Activated naive CD4-positive, alpha-beta T cell treated with anti-CD3 and anti-CD28 coated beads, Interleukin-2, amount 10 ng/mL, durations not matched to agents 7 days and 5 days (primary cell): ENCODE measurements at regions of chr2 and their contacts with region 1.

Region 1: GRCh38 chr2:175251425-175252041 is 70.0 kb upstream of the ATP5MC3 start:
- DNase-seq: peak; percentile 22
- H3K4me3 Mint-ChIP-seq: no peak overlapping the region
- H3K27ac Mint-ChIP-seq: no peak overlapping the region
- H3K4me1 Mint-ChIP-seq: peaks cover 2% of the 10 kb centered on the region
- H3K27me3 Mint-ChIP-seq: peaks cover 15% of the 10 kb centered on the region

Region 2: DNA sequence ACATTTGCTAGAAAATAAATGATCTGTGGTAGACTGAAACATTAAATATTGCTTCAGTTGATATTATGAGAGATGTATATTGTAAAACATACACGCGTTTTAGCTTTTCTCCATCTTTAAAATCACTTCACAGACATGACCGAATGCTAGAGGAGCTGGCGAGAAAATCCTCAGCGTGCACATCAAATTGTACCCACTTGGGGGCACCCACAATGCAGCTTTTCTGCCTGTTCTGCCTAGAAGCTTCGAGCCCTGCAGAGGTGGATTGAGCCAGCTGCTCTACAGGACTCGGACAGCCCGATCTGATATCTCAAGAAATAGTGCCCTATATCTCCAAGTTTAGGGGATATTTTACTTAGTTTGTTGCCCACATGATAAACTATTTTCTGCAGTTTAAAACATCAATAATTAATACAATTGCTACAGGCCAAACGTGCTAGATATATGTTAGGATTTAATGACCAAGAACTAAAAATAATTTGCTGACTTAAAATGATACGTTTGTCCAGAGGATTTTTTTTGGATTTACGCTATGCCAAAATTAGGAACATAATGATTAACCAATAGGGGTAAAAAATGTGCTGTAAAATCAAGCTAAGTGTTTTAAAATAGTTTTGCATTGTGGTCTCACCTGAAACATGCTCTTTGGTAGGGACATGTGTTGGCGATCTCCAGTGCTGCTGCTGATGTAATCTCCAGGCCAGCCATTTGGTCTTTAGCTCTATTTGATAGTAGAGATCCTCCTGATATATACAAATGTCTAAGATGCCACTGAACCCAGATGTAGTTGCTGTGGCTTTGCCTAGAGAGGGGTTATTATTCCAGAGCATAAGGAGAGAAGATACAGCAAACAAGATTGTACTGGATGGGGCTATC is 47.7 kb before region 1 on chr2:
- CTCF ChIA-PET with region 1: interaction called, 14 read pairs
- DNase-seq: peak; percentile 57
- H3K4me3 Mint-ChIP-seq: no peak overlapping the region
- H3K27ac Mint-ChIP-seq: no peak overlapping the region
- H3K4me1 Mint-ChIP-seq: peaks cover 4% of the 10 kb centered on the region
- H3K27me3 Mint-ChIP-seq: peaks cover 8% of the 10 kb centered on the region

Region 3: DNA sequence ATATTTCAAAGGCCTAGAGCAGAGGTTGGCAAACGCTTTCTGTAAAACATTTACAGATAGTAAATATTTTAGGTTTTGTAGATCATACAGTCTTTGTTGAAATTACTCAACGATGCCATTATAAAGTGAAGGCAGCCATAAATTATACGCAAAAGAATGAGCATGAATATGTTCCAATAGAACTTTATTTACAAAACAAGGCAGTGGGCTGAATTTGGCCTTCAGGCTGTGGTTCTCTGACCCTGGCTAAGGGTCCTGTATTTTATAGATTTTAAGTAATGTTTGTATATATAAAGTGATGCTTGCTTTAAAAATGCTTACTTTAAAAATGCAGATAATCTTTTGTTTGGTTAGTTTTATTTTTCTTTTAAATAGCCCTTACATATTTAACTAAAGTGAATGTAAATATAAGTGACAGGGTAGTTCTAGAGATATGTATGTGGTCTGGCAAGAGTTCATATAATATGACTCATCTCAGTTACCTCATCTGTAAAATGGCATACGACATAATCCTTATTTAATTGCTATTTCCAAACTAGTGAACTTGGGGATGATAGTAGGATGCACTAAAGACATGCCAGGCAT is 18.3 kb before region 1 on chr2:
- CTCF ChIA-PET with region 1: interaction called, 13 read pairs
- DNase-seq: no peak
- H3K4me3 Mint-ChIP-seq: no peak overlapping the region
- H3K27ac Mint-ChIP-seq: no peak overlapping the region
- H3K4me1 Mint-ChIP-seq: no peaks in the 10 kb centered on the region
- H3K27me3 Mint-ChIP-seq: peaks cover under 1% of the 10 kb centered on the region

Region 4: DNA sequence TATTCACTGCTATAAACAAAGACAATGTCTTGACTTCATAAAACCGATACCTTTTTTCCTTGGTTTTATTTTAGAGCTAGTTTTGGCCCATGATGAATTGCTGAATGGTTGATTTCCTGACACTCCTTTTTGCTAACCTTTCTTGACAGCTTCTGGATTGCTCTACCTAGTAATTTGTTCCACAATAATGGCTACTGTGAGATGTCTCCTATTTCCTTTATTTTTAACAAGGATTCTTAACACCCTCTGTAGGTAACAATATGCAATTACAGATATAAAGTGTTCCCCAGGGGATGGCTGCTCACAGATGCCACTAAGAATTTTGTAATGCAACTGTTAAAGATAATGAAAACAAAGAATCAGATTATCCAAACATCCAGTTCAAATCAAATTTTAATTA is 30.8 kb after region 1 on chr2:
- CTCF ChIA-PET with region 1: interaction called, 14 read pairs
- DNase-seq: no peak
- H3K4me3 Mint-ChIP-seq: no peak overlapping the region
- H3K27ac Mint-ChIP-seq: no peak overlapping the region
- H3K4me1 Mint-ChIP-seq: no peaks in the 10 kb centered on the region
- H3K27me3 Mint-ChIP-seq: peaks cover 5% of the 10 kb centered on the region

Region 5: DNA sequence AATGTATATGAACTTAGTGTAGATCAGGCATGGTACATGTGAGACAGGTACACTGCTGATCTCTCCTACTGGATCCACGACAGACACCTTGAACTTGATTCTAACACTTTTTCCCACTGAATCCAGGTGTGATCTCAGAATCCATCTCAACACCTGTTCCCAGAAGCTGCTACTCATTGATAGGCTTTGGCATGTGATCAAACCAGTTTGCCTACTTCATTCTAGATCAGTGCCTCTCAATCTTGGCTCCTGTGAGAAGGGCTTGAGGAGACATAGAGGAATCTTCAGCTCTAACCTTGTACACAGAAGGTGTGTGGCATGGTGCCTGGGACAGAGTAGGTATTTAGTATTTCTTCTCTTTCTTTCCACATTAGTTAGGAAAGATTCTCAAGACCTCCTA is 142.3 kb after region 1 on chr2:
- CTCF ChIA-PET with region 1: no interaction called
- DNase-seq: no peak
- H3K4me3 Mint-ChIP-seq: no peak overlapping the region
- H3K27ac Mint-ChIP-seq: no peak overlapping the region
- H3K4me1 Mint-ChIP-seq: no peaks in the 10 kb centered on the region
- H3K27me3 Mint-ChIP-seq: peaks cover 3% of the 10 kb centered on the region